Activated CD8-positive, alpha-beta T cell treated with anti-CD3 and anti-CD28 coated beads for 36 hours (primary cell): ENCODE measurements at regions of chr19 and their contacts with region 1.

Region 1: DNA sequence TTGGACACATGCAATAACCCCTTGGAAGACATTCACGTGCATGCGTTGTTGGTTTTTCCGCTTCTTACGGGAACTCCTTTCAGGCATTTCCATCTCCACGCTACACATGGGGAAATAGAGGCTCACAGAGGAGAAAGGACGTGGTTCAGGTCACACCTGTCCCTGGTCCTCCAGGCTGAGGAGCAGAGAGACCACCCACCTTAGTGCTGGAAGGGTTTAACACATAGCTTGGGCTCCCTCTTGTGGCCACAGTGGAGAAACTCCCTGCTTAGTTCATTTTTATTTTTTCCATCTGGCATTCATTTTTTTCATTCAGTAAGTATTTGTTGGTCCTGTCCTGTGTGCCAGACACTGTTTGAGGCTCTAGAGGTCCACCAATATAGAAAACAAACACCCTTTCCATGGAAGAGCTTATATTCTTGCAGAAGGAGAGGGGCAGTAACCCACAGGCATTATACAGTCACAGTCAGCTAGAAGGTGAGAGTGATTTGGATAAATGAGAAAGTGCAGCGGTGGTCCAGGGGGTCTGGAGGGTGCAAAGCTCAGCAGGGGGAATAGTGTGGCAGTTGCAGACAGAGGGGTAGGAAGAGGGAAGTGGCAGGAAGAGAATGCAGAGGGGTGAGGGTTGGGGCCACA is 24.2 kb upstream of the TTYH1 start:
- DNase-seq: peak; percentile 73
- ATAC-seq: peak; percentile 38
- H3K4me3 Mint-ChIP-seq: no peak overlapping the region
- H3K27ac Mint-ChIP-seq: no peak overlapping the region
- H3K4me1 Mint-ChIP-seq: peaks cover 33% of the 10 kb centered on the region
- H3K27me3 Mint-ChIP-seq: peaks cover 3% of the 10 kb centered on the region
- CTCF ChIP-seq: peak; percentile 97

Region 2: GRCh38 chr19:54137086-54137921 is 253.8 kb before region 1 on chr19 and contains the start of gene CNOT3:
- CTCF ChIA-PET with region 1: no interaction called
- POLR2A ChIA-PET with region 1: no interaction called
- intact Hi-C with region 1: no loop called
- DNase-seq: peak; percentile 100
- ATAC-seq: peak; percentile 85
- H3K4me3 Mint-ChIP-seq: peak within 1 kb of the TSS; percentile 87
- H3K27ac Mint-ChIP-seq: peak within 1 kb of the TSS; percentile 92
- H3K4me1 Mint-ChIP-seq: peaks cover 47% of the 10 kb centered on the region
- H3K27me3 Mint-ChIP-seq: no peaks in the 10 kb centered on the region
- CTCF ChIP-seq: no peak
- total RNA-seq, gene CNOT3: 48.8 to 50.7 TPM

Region 3: DNA sequence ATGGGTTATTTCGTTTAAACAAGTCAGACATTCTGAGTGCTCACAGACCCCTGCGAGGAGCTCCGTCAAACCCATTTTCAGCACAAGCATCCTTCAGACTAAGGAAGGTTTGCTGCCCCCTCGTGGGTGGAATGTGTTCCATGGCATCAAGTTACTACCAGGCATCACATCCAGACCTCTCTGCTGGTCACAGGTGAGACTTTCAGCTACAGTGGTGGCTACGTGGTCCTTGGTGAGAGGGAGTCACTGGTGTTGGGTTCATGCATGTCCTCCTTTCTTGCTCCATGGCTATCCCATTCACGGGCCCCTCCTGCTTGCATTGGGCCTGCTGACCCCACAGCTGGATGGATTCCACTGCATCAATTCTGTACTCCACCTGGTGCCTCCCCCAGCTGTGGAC is 124.9 kb before region 1 on chr19:
- CTCF ChIA-PET with region 1: interaction called, 12 read pairs
- POLR2A ChIA-PET with region 1: no interaction called
- intact Hi-C with region 1: no loop called
- DNase-seq: peak; percentile 91
- ATAC-seq: peak; percentile 76
- H3K4me3 Mint-ChIP-seq: no peak overlapping the region
- H3K27ac Mint-ChIP-seq: no peak overlapping the region
- H3K4me1 Mint-ChIP-seq: no peaks in the 10 kb centered on the region
- H3K27me3 Mint-ChIP-seq: peaks cover 11% of the 10 kb centered on the region
- CTCF ChIP-seq: peak; percentile 80

Region 4: GRCh38 chr19:54325194-54325621 is 65.9 kb before region 1 on chr19:
- CTCF ChIA-PET with region 1: interaction called, 147 read pairs
- POLR2A ChIA-PET with region 1: interaction called, 3 read pairs
- intact Hi-C with region 1: loop called (anchors 1 kb)
- DNase-seq: peak; percentile 60
- ATAC-seq: peak; percentile 79
- H3K4me3 Mint-ChIP-seq: no peak overlapping the region
- H3K27ac Mint-ChIP-seq: no peak overlapping the region
- H3K4me1 Mint-ChIP-seq: peaks cover 16% of the 10 kb centered on the region
- H3K27me3 Mint-ChIP-seq: peaks cover 12% of the 10 kb centered on the region
- CTCF ChIP-seq: peak; percentile 97

Region 5: DNA sequence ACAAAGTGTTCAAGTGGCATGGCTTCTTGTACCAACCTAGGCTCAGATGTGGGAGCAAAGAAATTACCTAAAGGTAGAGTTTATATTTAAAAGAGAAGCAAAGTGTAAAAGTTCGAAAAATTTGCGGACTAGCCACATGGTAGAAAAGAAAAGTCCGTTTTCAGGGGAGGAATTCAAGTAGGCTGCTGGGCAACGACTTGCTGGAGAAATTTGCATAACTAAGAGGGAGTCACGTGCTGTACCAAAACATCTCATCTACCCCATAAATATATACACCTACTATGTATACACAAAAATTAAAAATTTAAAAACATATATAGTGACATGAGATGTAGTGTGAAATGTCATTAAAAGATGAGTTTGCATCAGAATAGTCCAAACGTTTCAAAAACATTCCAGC is 24.2 kb before region 1 on chr19:
- CTCF ChIA-PET with region 1: interaction called, 14 read pairs
- POLR2A ChIA-PET with region 1: interaction called, 3 read pairs
- intact Hi-C with region 1: no loop called
- DNase-seq: no peak
- ATAC-seq: no peak
- H3K4me3 Mint-ChIP-seq: no peak overlapping the region
- H3K27ac Mint-ChIP-seq: no peak overlapping the region
- H3K4me1 Mint-ChIP-seq: peaks cover 62% of the 10 kb centered on the region
- H3K27me3 Mint-ChIP-seq: peaks cover 14% of the 10 kb centered on the region
- CTCF ChIP-seq: no peak

Region 6: GRCh38 chr19:54407780-54408179 is 16.7 kb after region 1 on chr19:
- CTCF ChIA-PET with region 1: interaction called, 23 read pairs
- POLR2A ChIA-PET with region 1: interaction called, 3 read pairs
- intact Hi-C with region 1: no loop called
- DNase-seq: no peak
- ATAC-seq: no peak
- H3K4me3 Mint-ChIP-seq: no peak overlapping the region
- H3K27ac Mint-ChIP-seq: no peak overlapping the region
- H3K4me1 Mint-ChIP-seq: no peaks in the 10 kb centered on the region
- H3K27me3 Mint-ChIP-seq: peaks cover 8% of the 10 kb centered on the region
- CTCF ChIP-seq: no peak

Region 7: GRCh38 chr19:54459282-54460229 is 68.5 kb after region 1 on chr19:
- CTCF ChIA-PET with region 1: no interaction called
- POLR2A ChIA-PET with region 1: no interaction called
- intact Hi-C with region 1: no loop called
- DNase-seq: no peak
- ATAC-seq: no peak
- H3K4me3 Mint-ChIP-seq: no peak overlapping the region
- H3K27ac Mint-ChIP-seq: peak overlapping the region; percentile 53
- H3K4me1 Mint-ChIP-seq: peaks cover 27% of the 10 kb centered on the region
- H3K27me3 Mint-ChIP-seq: no peaks in the 10 kb centered on the region
- CTCF ChIP-seq: no peak

Region 8: GRCh38 chr19:54502518-54503048 is 111.5 kb after region 1 on chr19 and contains the start of gene LAIR2:
- CTCF ChIA-PET with region 1: no interaction called
- POLR2A ChIA-PET with region 1: no interaction called
- intact Hi-C with region 1: no loop called
- DNase-seq: peak; percentile 43
- ATAC-seq: peak; percentile 60
- H3K4me3 Mint-ChIP-seq: peak within 1 kb of the TSS; percentile 50
- H3K27ac Mint-ChIP-seq: no peak within 1 kb of the TSS
- H3K4me1 Mint-ChIP-seq: peaks cover 30% of the 10 kb centered on the region
- H3K27me3 Mint-ChIP-seq: peaks cover 29% of the 10 kb centered on the region
- CTCF ChIP-seq: no peak
- total RNA-seq, gene LAIR2: 1.5 to 2.1 TPM